ENCODE measurements at regions of chr12 and their contacts with region 1.

Region 1: GRCh38 chr12:114476159-114476558 is 70.2 kb upstream of the TBX5 start:
- DNase-seq: no peak
- ATAC-seq: peak; percentile 75

Region 2: DNA sequence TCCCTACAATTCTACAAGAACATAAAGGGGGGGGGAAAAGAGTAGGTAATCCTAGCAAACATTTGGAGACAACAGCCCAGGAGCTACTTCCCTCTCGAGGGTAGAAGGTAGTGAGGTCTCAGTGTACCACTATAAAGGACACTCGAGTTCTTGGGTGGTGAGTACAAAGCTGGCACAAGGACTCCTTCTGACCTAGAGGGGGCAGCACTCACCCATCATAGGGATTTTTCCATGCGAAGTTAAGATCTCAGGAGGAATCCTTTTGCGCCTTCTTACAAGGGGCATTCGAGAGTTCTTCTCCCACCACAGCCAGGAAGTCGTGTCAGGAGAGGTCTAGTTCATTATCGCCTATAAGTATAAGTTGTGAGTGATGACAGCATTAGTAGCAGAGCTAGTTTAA is 309.8 kb before region 1 on chr12:
- intact Hi-C with region 1: loop called (anchors 10 kb)
- DNase-seq: no peak
- ATAC-seq: peak; percentile 82

Region 3: DNA sequence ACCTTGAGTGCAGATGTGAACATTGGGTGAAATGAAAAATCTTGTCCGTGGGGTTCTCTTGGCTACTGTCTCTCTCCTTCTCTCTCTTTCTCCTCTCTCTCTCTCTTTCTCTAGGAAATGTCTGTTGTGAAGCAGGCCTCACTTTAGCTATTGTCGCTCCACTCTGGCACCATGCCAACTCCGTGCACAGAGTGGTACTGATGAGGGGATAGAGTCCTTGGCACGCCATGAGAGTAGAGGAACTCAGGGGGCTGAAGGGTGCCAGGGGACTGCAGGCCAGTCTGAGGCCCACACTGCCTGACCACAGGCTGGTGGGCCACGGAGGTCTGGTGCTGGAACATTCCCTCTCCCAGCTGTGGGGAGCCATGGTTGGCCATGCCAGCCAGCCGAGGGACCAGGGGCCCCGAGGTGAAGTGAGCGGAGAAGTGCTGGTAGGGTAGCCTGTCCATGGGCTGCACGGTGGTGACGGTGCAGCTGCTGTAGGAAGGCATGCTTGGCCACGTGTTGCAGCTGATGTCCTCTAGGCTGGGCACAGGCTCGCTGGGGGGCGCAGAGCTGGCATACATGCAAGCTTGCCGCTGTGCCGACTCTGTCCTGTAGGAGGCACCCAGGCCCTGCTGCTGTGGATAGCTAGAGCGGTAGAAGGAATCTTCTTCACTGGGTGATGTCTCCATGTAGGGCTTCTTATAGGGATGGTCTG is 120.6 kb before region 1 on chr12:
- intact Hi-C with region 1: loop called (anchors 10 kb)
- DNase-seq: peak; percentile 63
- ATAC-seq: peak; percentile 65

Region 4: GRCh38 chr12:114547636-114548035 is 71.5 kb after region 1 on chr12:
- intact Hi-C with region 1: no loop called
- DNase-seq: no peak
- ATAC-seq: no peak